ENCODE measurements at regions of chr1 and their contacts with region 1.

Region 1: GRCh38 chr1:207828485-207829158 is 76.8 kb downstream of the CD46 start:
- DNase-seq: peak; percentile 87
- ATAC-seq: peak; percentile 82
- H3K4me3 ChIP-seq: no peak overlapping the region
- H3K27ac ChIP-seq: no peak overlapping the region
- H3K4me1 ChIP-seq: peaks cover 50% of the 10 kb centered on the region
- H3K27me3 ChIP-seq: no peaks in the 10 kb centered on the region; a peak in 2 of 5 replicates
- CTCF ChIP-seq: peak; percentile 89
- EP300 ChIP-seq: no peak
- POLR2A ChIP-seq: no peak
- RAD21 ChIP-seq: peak; percentile 85

Region 2: DNA sequence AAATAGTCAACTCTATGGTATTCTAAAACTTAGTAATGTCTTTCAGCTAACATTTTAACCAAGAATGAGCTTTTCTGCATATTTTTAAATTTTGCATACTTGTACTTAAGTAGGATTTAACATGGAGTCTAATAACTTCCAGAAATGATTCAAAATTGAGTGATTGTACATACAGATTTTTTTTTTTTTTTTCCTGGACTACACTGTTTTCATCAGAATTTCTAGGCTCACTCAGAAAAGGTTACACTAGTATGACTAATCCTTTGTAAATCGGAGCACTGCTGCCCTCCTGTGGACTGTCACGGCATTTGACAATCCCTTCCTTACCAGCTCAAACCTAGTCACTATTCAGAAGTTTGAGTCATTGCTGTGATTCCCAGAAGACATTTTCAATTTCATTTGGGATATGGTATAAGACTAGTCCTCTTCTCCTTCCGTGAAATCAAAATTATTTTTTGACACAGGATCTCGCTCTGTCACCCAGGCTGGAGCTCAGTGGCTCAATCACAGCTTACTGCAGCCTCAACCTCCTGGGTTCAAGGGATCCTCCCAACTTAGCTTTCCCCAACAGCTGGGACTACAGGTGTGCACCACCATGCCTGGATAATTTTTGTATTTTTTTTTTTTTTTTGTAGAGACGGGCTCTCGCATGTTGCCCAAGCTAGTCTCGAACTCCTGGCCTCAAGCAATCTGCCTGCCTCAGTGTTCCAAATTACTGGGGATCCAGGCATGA is 31.2 kb before region 1 on chr1:
- CTCF ChIA-PET with region 1: no interaction called
- POLR2A ChIA-PET with region 1: interaction called, 10 read pairs
- in situ Hi-C with region 1: no loop called
- intact Hi-C with region 1: no loop called
- DNase-seq: peak; percentile 76
- ATAC-seq: peak; percentile 84
- H3K4me3 ChIP-seq: no peak overlapping the region
- H3K27ac ChIP-seq: no peak overlapping the region
- H3K4me1 ChIP-seq: no peaks in the 10 kb centered on the region
- H3K27me3 ChIP-seq: no peaks in the 10 kb centered on the region
- CTCF ChIP-seq: peak; percentile 75
- EP300 ChIP-seq: no peak
- POLR2A ChIP-seq: no peak
- RAD21 ChIP-seq: no peak; the same call in 1 of the 2 replicates

Region 3: GRCh38 chr1:207811920-207812720 is 16.5 kb before region 1 on chr1:
- CTCF ChIA-PET with region 1: no interaction called
- POLR2A ChIA-PET with region 1: interaction called, 14 read pairs
- in situ Hi-C with region 1: no loop called
- intact Hi-C with region 1: no loop called
- DNase-seq: peak; percentile 64
- ATAC-seq: peak; percentile 94
- H3K4me3 ChIP-seq: no peak overlapping the region
- H3K27ac ChIP-seq: no peak overlapping the region
- H3K4me1 ChIP-seq: peaks cover 5% of the 10 kb centered on the region
- H3K27me3 ChIP-seq: no peaks in the 10 kb centered on the region
- CTCF ChIP-seq: peak; percentile 82
- EP300 ChIP-seq: no peak
- POLR2A ChIP-seq: no peak
- RAD21 ChIP-seq: peak; percentile 51; the same call in 1 of the 2 replicates

Region 4: DNA sequence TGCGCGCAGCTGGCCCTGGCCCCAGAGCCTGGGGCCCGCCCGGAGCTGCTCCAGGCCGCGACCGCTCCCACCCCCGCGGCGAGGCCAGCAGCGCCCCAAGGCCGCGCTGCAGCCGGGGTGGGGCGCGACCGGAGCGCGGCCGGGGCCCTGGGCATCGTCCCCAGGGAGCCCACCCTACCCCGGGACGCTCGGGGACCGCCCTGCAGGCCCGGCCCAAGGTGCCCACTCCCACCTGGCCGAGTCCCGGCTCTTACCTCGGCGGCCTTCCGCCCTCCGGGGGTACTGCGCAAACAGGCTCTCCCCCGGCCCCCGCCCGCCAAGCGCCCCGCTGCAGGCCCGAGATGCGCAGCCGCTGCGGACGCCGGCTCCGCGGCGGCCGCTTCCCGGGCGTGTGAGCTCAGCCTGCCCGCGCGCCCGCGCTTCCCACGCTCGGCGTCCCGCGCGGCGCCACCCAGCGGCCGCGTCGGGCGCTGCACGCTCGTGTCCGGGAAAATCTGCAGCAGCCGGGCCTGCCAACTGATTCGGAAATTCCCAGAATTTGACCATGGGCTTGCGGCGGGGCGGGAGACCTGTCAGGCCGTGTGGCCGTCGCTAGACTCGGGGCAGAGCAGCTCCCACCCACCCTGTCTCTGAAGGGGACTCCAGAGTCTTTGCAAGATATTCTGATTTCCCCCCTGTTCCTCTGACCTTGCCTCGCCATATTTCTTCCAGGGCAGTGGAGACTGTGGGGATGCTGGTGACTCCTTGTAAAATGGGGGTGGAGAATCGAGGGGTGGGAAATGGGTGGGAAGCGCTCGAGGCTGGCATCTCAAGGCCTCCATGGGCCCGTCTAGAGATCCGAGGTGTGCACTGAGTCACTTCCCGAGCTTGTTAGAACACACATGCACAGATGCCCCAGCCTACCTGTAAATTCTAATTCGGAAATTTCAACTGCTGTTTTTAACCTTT is 40.4 kb after region 1 on chr1:
- CTCF ChIA-PET with region 1: interaction called, 26 read pairs
- POLR2A ChIA-PET with region 1: interaction called, 13 read pairs
- in situ Hi-C with region 1: loop called (anchors 5 kb)
- intact Hi-C with region 1: loop called (anchors 1 kb)
- DNase-seq: peak; percentile 41
- ATAC-seq: peak; percentile 91
- H3K4me3 ChIP-seq: peak overlapping the region; percentile 61 to 83 (median 82)
- H3K27ac ChIP-seq: no peak overlapping the region
- H3K4me1 ChIP-seq: peaks cover 37% of the 10 kb centered on the region
- H3K27me3 ChIP-seq: peaks cover 0 to 17% of the 10 kb centered on the region in 2 experiments; a peak in 2 of 5 replicates
- CTCF ChIP-seq: peak; percentile 76
- EP300 ChIP-seq: peak in 1 of 2 experiments; percentile 35; a peak in 1 of 4 replicates
- POLR2A ChIP-seq: no peak
- RAD21 ChIP-seq: peak; percentile 88

Region 5: DNA sequence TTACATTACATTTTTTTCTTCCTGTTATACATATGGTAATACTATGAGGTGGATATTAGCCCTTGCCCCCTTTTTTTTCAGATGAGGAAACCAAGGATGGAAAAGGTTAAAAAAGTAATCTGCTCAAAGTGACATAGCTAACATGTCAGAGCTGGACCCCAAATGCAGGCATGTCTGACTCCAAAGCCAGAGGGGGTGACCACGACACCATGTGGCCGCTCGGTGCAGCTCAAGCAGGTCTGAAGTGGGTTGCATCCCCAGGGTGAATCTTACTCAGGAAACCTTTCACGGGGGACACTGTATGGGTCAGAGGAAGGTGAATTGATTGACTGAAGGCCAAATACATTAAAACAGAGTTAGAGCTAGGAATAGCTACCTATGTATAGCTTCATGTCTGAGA is 47.5 kb after region 1 on chr1:
- CTCF ChIA-PET with region 1: interaction called, 12 read pairs
- POLR2A ChIA-PET with region 1: interaction called, 3 read pairs
- in situ Hi-C with region 1: no loop called
- intact Hi-C with region 1: loop called (anchors 1 kb)
- DNase-seq: peak; percentile 12
- ATAC-seq: peak; percentile 93
- H3K4me3 ChIP-seq: no peak overlapping the region
- H3K27ac ChIP-seq: no peak overlapping the region
- H3K4me1 ChIP-seq: peaks cover 17% of the 10 kb centered on the region
- H3K27me3 ChIP-seq: peaks cover 0 to 20% of the 10 kb centered on the region in 2 experiments; a peak in 3 of 5 replicates
- CTCF ChIP-seq: peak; percentile 71
- EP300 ChIP-seq: no peak
- POLR2A ChIP-seq: no peak
- RAD21 ChIP-seq: 0 out of 2 replicates have a peak, but pooled peaks have one; percentile 28

Region 6: GRCh38 chr1:207885129-207886032 is 56.8 kb after region 1 on chr1:
- CTCF ChIA-PET with region 1: no interaction called
- POLR2A ChIA-PET with region 1: interaction called, 10 read pairs
- in situ Hi-C with region 1: no loop called
- intact Hi-C with region 1: no loop called
- DNase-seq: peak; percentile 70
- ATAC-seq: peak; percentile 96
- H3K4me3 ChIP-seq: no peak overlapping the region
- H3K27ac ChIP-seq: no peak overlapping the region
- H3K4me1 ChIP-seq: peaks cover 13% of the 10 kb centered on the region; the same call in 1 of the 2 replicates
- H3K27me3 ChIP-seq: peaks cover 2 to 38% of the 10 kb centered on the region in 2 experiments
- CTCF ChIP-seq: peak; percentile 90
- EP300 ChIP-seq: no peak; a peak in 1 of 4 replicates
- POLR2A ChIP-seq: no peak
- RAD21 ChIP-seq: peak; percentile 81; the same call in 1 of the 2 replicates

Region 7: GRCh38 chr1:207963427-207964194 is 135.0 kb after region 1 on chr1:
- CTCF ChIA-PET with region 1: interaction called, 5 read pairs
- POLR2A ChIA-PET with region 1: interaction called, 3 read pairs
- in situ Hi-C with region 1: loop called (anchors 5 kb)
- intact Hi-C with region 1: loop called (anchors 1 kb)
- DNase-seq: peak; percentile 74
- ATAC-seq: peak; percentile 94
- H3K4me3 ChIP-seq: peak overlapping the region; percentile 6 to 64 (median 43); a peak in 4 of 6 replicates
- H3K27ac ChIP-seq: no peak overlapping the region
- H3K4me1 ChIP-seq: peaks cover 13% of the 10 kb centered on the region
- H3K27me3 ChIP-seq: peaks cover 1 to 27% of the 10 kb centered on the region in 2 experiments; a peak in 2 of 5 replicates
- CTCF ChIP-seq: peak; percentile 94
- EP300 ChIP-seq: peak in 1 of 2 experiments; percentile 52; a peak in 1 of 4 replicates
- POLR2A ChIP-seq: peak; percentile 62 to 73
- RAD21 ChIP-seq: peak; percentile 100

Measured in HepG2 (cell line).